Activated CD8-positive, alpha-beta T cell treated with anti-CD3 and anti-CD28 coated beads for 36 hours (primary cell): ENCODE measurements at regions of chr1 and their contacts with region 1.

Region 1: GRCh38 chr1:119367427-119368124 is 1.0 kb upstream of the HAO2 start:
- DNase-seq: no peak
- ATAC-seq: no peak
- H3K4me3 Mint-ChIP-seq: no peak overlapping the region
- H3K27ac Mint-ChIP-seq: no peak overlapping the region
- H3K4me1 Mint-ChIP-seq: no peaks in the 10 kb centered on the region
- H3K27me3 Mint-ChIP-seq: peaks cover 12% of the 10 kb centered on the region
- CTCF ChIP-seq: peak; percentile 66

Region 2: DNA sequence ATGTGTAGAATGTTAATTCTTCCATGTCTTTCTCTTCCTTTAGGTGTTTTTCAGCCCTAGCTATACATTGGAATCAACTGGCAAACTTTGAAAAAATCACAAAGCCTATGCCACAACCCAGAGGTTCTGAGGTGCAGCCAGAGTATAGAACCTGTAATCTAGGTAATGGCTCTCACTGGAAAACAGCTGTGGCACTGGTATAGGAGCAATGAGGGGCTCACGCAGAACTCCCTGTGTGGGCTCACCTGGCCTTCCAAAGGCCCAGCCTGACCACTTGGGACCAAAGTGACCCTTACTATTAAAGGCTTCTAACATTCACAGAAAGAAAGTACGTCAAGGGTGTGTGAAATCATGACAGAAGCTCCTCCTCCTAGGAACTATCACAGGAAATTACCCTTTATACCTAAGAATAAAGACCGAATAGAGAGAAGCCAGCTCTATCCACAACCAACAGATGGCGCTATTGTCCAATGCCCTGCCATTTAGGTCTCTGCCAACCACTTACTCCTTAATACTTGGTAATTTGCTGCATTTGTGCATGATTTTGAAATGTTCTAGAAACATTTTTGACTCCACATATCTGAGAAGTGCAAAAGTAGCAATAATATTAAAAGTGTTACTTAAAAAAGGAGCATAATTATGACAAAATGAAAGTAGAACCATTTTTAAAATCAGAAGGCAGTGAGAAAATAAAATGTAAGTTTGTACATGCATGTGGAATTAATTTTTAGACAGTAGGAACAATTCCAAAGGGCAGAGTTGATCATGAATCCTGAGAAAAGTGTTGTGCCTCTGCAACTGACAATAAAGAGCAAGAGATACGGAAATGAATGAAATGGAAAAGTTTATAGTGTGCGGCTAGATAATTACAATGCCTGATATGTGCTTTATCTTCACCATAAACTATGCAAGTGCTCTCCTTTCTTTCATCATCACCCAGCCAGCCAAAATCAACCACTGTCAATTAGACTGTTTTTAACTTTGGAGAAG is 92.1 kb before region 1 on chr1:
- CTCF ChIA-PET with region 1: interaction called, 19 read pairs
- POLR2A ChIA-PET with region 1: no interaction called
- intact Hi-C with region 1: no loop called
- DNase-seq: peak; percentile 66
- ATAC-seq: peak; percentile 72
- H3K4me3 Mint-ChIP-seq: no peak overlapping the region
- H3K27ac Mint-ChIP-seq: no peak overlapping the region
- H3K4me1 Mint-ChIP-seq: no peaks in the 10 kb centered on the region
- H3K27me3 Mint-ChIP-seq: peaks cover 9% of the 10 kb centered on the region
- CTCF ChIP-seq: peak; percentile 87

Region 3: GRCh38 chr1:119286587-119287181 is 80.9 kb before region 1 on chr1:
- CTCF ChIA-PET with region 1: interaction called, 8 read pairs
- POLR2A ChIA-PET with region 1: no interaction called
- intact Hi-C with region 1: loop called (anchors 2 kb)
- DNase-seq: peak; percentile 46
- ATAC-seq: peak; percentile 76
- H3K4me3 Mint-ChIP-seq: no peak overlapping the region
- H3K27ac Mint-ChIP-seq: no peak overlapping the region
- H3K4me1 Mint-ChIP-seq: no peaks in the 10 kb centered on the region
- H3K27me3 Mint-ChIP-seq: peaks cover 15% of the 10 kb centered on the region
- CTCF ChIP-seq: peak; percentile 61